Pancreas (tissue), 10 donors: ENCODE measurements at regions of chr10 and their contacts with region 1.

Region 1: DNA sequence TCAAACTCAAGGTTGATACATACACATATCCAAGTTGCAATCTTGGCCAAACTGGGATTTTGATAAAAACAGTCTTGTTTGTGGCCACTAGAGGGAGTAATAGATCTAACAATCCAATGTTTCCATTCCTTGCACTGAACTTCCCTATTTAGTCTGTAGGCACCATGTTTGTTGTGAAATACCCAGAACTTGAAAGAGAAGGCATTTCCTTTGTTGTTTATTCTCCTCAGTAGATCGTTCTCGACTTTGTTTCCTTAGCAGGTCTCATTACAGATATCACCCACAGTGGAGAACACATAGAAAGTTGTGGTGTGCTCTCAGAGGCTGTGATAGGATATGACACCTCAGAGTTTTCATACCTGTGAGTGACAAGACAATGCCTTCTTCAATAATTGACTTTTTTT is 70.3 kb upstream of the MXI1 start:
- DNase-seq: no peak
- ATAC-seq: peak; percentile 83 to 95 (median 92)
- H3K4me3 ChIP-seq: no peak overlapping the region
- H3K27ac ChIP-seq: peak overlapping the region in 2 of 4 donors; percentile 53 to 61
- H3K4me1 ChIP-seq: peaks cover 6 to 19% (median 6%) of the 10 kb centered on the region in 3 donors
- H3K27me3 ChIP-seq: no peaks in the 10 kb centered on the region
- CTCF ChIP-seq: peak; percentile 73 to 84 (median 78)

Region 2: GRCh38 chr10:109934958-109935706 is 202.0 kb before region 1 on chr10:
- intact Hi-C with region 1: no loop called
- DNase-seq: peak in 3 of 6 donors; percentile 42 to 74 (median 58)
- ATAC-seq: peak; percentile 91 to 97 (median 94)
- H3K4me3 ChIP-seq: no peak overlapping the region
- H3K27ac ChIP-seq: peak overlapping the region in 3 of 4 donors; percentile 16 to 64 (median 50)
- H3K4me1 ChIP-seq: peaks cover 0 to 7% (median 5%) of the 10 kb centered on the region in 3 donors
- H3K27me3 ChIP-seq: no peaks in the 10 kb centered on the region
- CTCF ChIP-seq: no peak

Region 3: DNA sequence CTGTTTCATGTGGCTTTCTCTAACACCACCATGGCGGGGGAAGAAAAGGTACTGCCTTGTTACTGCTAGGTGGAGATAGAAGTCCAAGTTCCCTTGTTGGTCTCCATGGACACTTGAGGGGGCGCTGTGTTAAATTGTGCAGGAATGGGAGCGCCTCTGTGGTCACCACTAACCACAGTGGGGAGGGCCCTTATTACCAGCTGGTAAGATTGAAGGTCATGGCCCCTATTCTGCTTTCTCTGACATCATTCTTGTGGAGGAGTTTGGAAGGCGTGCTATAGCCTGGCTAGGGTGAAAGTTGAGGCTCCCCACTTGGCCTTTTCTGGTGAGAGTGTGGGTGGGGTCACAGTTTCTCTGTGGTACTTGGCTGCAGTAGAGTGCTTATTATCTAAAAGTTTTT is 55.4 kb after region 1 on chr10:
- intact Hi-C with region 1: loop called in 1 of 3 experiments (anchors 10 kb)
- DNase-seq: no peak
- ATAC-seq: no peak
- H3K4me3 ChIP-seq: no peak overlapping the region
- H3K27ac ChIP-seq: no peak overlapping the region
- H3K4me1 ChIP-seq: no peaks in the 10 kb centered on the region
- H3K27me3 ChIP-seq: no peaks in the 10 kb centered on the region
- CTCF ChIP-seq: no peak

Region 4: GRCh38 chr10:110225756-110226542 is 88.8 kb after region 1 on chr10:
- intact Hi-C with region 1: loop called in 1 of 3 experiments (anchors 10 kb)
- DNase-seq: peak; percentile 92 to 95 (median 93)
- ATAC-seq: peak; percentile 65 to 71 (median 68)
- H3K4me3 ChIP-seq: peak overlapping the region; percentile 59 to 83 (median 68)
- H3K27ac ChIP-seq: peak overlapping the region; percentile 76 to 96 (median 78)
- H3K4me1 ChIP-seq: peaks cover 0 to 16% (median 5%) of the 10 kb centered on the region in 3 donors
- H3K27me3 ChIP-seq: no peaks in the 10 kb centered on the region
- CTCF ChIP-seq: peak; percentile 57 to 62 (median 60)

Region 5: GRCh38 chr10:110279407-110279986 is 142.4 kb after region 1 on chr10:
- intact Hi-C with region 1: loop called in 2 of 3 experiments (anchors 5 to 10 kb)
- DNase-seq: peak in 3 of 6 donors; percentile 37 to 53 (median 44)
- ATAC-seq: peak; percentile 77 to 96 (median 94)
- H3K4me3 ChIP-seq: no peak overlapping the region
- H3K27ac ChIP-seq: no peak overlapping the region
- H3K4me1 ChIP-seq: peaks cover 0 to 6% (median 0%) of the 10 kb centered on the region in 3 donors
- H3K27me3 ChIP-seq: no peaks in the 10 kb centered on the region
- CTCF ChIP-seq: peak in 3 of 4 donors; percentile 46 to 67 (median 58)

Region 6: GRCh38 chr10:110556969-110557601 is 419.9 kb after region 1 on chr10:
- intact Hi-C with region 1: loop called in 1 of 3 experiments (anchors 10 kb)
- DNase-seq: peak in 2 of 6 donors; percentile 33 to 43
- ATAC-seq: peak in 3 of 4 donors; percentile 44 to 81 (median 76)
- H3K4me3 ChIP-seq: no peak overlapping the region
- H3K27ac ChIP-seq: no peak overlapping the region
- H3K4me1 ChIP-seq: no peaks in the 10 kb centered on the region
- H3K27me3 ChIP-seq: peaks cover 0 to 3% (median 0%) of the 10 kb centered on the region in 4 donors
- CTCF ChIP-seq: peak; percentile 15 to 68 (median 24)